SK-N-SH (cell line): ENCODE measurements at regions of chr14 and their contacts with region 1.

Region 1: GRCh38 chr14:106564058-106564656 is 1037.8 kb downstream of the TMEM121 start:
- DNase-seq: peak; percentile 45
- H3K4me3 ChIP-seq: no peak overlapping the region
- H3K27ac ChIP-seq: no peak overlapping the region
- H3K4me1 ChIP-seq: no peaks in the 10 kb centered on the region
- H3K27me3 ChIP-seq: peaks cover 19% of the 10 kb centered on the region; the same call in 1 of the 2 replicates
- CTCF ChIP-seq: peak; percentile 74
- EP300 ChIP-seq: no peak
- RAD21 ChIP-seq: peak; percentile 37

Region 2: DNA sequence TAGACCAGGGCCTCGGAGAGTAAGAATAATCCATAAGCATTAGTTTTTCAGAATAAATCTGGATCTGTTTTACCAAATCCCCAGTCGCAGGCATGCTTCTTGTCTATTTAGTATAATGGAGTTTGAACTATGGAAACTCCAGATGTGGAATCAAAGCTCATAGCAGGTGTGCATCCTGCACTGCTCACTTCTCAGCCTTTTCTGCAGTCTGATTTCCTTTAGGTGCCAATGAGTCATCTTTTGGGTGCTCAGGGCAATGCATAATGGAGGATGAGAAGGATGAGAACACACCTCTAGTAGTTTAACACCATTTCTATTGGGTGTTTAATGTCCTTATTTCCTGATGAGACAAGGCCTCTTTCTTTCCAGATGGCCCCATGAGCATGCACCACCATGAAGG is 76.6 kb before region 1 on chr14:
- CTCF ChIA-PET with region 1: no interaction called
- POLR2A ChIA-PET with region 1: no interaction called
- DNase-seq: no peak
- H3K4me3 ChIP-seq: no peak overlapping the region
- H3K27ac ChIP-seq: no peak overlapping the region
- H3K4me1 ChIP-seq: no peaks in the 10 kb centered on the region
- H3K27me3 ChIP-seq: no peaks in the 10 kb centered on the region
- CTCF ChIP-seq: no peak
- EP300 ChIP-seq: no peak
- RAD21 ChIP-seq: no peak

Region 3: GRCh38 chr14:106578481-106578880 is 14.3 kb after region 1 on chr14:
- CTCF ChIA-PET with region 1: interaction called, 11 read pairs
- POLR2A ChIA-PET with region 1: no interaction called
- DNase-seq: no peak
- H3K4me3 ChIP-seq: no peak overlapping the region
- H3K27ac ChIP-seq: no peak overlapping the region
- H3K4me1 ChIP-seq: no peaks in the 10 kb centered on the region
- H3K27me3 ChIP-seq: peaks cover 22% of the 10 kb centered on the region; the same call in 1 of the 2 replicates
- CTCF ChIP-seq: no peak
- EP300 ChIP-seq: no peak
- RAD21 ChIP-seq: no peak